ENCODE measurements at regions of chr16 and their contacts with region 1.

Region 1: DNA sequence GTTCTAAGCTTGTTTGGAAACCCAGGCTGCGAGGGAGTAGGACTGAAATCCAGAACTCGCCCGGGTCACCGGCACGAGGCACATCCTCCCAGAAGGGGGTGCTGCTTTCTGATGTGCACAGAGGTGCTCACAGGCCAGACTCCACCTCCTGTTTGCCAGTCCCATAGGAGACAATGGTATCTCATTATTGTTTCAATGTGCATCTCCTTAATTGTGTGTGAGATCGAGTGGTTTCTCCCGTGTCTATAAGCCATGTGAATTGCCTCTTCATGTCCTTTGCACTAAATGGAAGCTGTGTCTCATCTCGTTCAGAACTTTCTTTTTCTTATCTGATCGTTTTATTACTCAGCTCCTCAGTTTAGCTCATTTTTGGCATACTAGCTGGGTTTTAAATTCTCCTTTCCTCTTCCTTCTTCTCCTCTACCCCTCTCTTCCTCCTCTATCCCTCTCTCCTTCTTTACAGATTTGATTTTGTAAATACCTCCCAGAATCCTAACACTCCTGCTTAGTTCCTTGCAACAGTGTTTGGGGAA is 32.1 kb upstream of the PRKCB start:
- DNase-seq: peak; percentile 42 to 81 (median 58)
- H3K4me3 ChIP-seq: peak overlapping the region; percentile 27
- H3K4me3 Mint-ChIP-seq: peak overlapping the region in 5 of 7 donors; percentile 27 to 61 (median 43)
- H3K27ac ChIP-seq: peak overlapping the region; percentile 13
- H3K27ac Mint-ChIP-seq: peak overlapping the region in 4 of 8 donors; percentile 11 to 93 (median 51)
- H3K4me1 ChIP-seq: no peaks in the 10 kb centered on the region
- H3K4me1 Mint-ChIP-seq: peaks cover 11 to 16% (median 11%) of the 10 kb centered on the region in 3 donors
- H3K27me3 ChIP-seq: no peaks in the 10 kb centered on the region
- H3K27me3 Mint-ChIP-seq: peaks cover 0 to 3% of the 10 kb centered on the region in 2 donors

Region 2: GRCh38 chr16:23826528-23827045 is 22.9 kb after region 1 on chr16:
- CTCF ChIA-PET with region 1: interaction called, 13 read pairs
- POLR2A ChIA-PET with region 1: no interaction called
- DNase-seq: peak in 2 of 5 donors; percentile 59 to 63
- H3K4me3 ChIP-seq: peak overlapping the region; percentile 6
- H3K4me3 Mint-ChIP-seq: peak overlapping the region; percentile 10 to 83 (median 70)
- H3K27ac ChIP-seq: peak overlapping the region; percentile 55
- H3K27ac Mint-ChIP-seq: peak overlapping the region; percentile 78 to 96 (median 92)
- H3K4me1 ChIP-seq: peaks cover 29% of the 10 kb centered on the region
- H3K4me1 Mint-ChIP-seq: peaks cover 37 to 44% (median 44%) of the 10 kb centered on the region in 3 donors
- H3K27me3 ChIP-seq: no peaks in the 10 kb centered on the region
- H3K27me3 Mint-ChIP-seq: no peaks in the 10 kb centered on the region

Region 3: DNA sequence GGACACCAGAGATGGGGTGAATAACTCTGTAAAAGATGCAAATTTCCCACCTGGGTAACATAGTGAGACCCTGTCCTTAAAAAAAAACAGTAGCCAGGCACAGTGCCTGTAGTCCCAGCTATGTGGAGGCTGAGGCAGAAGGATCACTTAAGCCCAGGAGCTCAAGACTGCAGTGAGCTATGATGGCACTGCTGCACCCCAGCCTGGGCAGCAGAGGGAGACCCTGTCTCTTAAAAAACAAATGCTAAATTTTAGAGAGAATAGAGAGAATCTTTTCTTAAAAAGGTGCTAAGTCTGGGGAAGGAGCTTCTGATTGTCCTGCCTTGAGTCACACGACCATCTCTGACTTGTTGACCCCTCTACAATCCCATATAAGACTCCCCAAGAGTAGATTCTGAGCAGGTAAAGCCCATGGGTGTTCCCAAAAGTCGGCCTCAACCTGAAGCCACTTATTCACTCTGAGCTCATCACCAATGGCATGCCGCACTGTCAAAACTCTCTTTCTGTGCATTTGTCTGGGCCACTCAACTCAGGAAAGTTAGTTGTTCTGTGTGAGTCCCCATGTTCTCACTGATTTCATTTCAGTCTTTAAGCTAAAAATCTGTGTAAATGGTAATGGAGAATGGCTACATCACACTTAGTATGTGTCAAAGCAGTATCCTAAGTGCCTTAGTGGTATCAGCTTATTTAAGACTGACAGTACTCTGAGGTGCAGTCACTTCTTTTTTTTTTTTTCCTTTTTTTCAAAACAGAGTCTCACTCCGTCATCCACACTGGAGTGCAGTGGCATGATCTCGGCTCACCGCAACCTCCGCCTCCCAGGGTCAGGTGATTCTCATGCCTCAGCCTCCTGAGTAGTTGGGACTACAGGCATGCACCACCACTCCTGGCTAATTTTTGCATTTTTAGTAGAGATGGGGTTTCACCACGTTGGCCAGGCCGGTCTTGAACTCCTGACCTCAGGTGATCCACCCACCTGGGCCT is 73.7 kb after region 1 on chr16:
- CTCF ChIA-PET with region 1: interaction called, 11 read pairs
- POLR2A ChIA-PET with region 1: interaction called, 5 read pairs
- DNase-seq: peak in 1 of 5 donors; percentile 28
- H3K4me3 ChIP-seq: no peak overlapping the region
- H3K4me3 Mint-ChIP-seq: peak overlapping the region in 1 of 7 donors; percentile 40
- H3K27ac ChIP-seq: no peak overlapping the region
- H3K27ac Mint-ChIP-seq: peak overlapping the region in 7 of 8 donors; percentile 50 to 80 (median 73)
- H3K4me1 ChIP-seq: peaks cover 54% of the 10 kb centered on the region
- H3K4me1 Mint-ChIP-seq: peaks cover 72 to 87% (median 82%) of the 10 kb centered on the region in 3 donors
- H3K27me3 ChIP-seq: no peaks in the 10 kb centered on the region
- H3K27me3 Mint-ChIP-seq: no peaks in the 10 kb centered on the region

Region 4: GRCh38 chr16:24036614-24037013 is 233.0 kb after region 1 on chr16:
- CTCF ChIA-PET with region 1: interaction called, 121 read pairs
- POLR2A ChIA-PET with region 1: interaction called, 3 read pairs
- DNase-seq: peak in 4 of 5 donors; percentile 12 to 50 (median 30)
- H3K4me3 ChIP-seq: no peak overlapping the region
- H3K4me3 Mint-ChIP-seq: peak overlapping the region in 6 of 7 donors; percentile 43 to 96 (median 77)
- H3K27ac ChIP-seq: no peak overlapping the region
- H3K27ac Mint-ChIP-seq: peak overlapping the region in 6 of 8 donors; percentile 11 to 84 (median 62)
- H3K4me1 ChIP-seq: peaks cover 42% of the 10 kb centered on the region
- H3K4me1 Mint-ChIP-seq: peaks cover 48 to 66% (median 61%) of the 10 kb centered on the region in 3 donors
- H3K27me3 ChIP-seq: no peaks in the 10 kb centered on the region
- H3K27me3 Mint-ChIP-seq: no peaks in the 10 kb centered on the region

Region 5: DNA sequence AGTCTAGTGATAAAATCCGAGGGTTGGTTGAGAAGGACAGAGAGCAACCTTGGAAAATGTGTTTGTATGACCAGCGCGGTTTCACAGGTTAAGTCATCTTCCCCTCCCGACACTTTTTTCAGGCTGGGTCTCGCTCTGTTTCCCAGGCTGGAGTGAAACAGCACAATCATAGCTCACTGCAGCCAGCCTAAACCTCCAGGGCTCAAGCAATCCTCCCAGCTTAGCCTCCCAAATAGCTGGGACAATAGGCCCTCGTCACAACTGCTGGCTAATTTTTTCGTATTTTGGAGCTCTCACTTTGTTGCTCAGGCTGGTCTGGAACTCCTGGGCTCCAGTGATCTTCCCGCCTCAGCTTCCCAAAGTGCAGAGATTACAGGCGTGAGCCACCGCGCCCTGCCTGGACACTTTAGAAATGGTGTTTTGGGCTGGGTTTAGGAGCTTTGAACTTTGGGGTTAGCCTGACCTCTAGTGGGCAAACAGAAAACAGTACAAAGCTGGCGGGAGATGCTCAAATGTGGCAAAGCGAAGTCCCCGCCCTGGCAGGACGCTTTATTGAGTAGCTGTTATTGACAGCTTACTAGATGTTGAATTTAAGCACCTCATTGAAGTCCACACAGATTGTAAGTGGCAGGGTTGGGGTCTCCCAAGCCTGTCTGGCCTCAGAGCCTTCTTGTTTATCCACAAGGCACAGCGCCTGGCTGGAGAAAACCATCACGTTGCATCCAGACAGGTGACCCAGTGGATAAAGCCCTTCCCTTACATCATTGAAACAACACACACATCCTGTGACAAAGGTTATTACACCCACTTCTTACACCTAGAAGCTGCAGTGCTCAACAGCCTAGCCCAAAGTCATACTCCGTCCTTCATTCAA is 701.1 kb after region 1 on chr16:
- CTCF ChIA-PET with region 1: interaction called, 11 read pairs
- POLR2A ChIA-PET with region 1: no interaction called
- DNase-seq: peak; percentile 19 to 59 (median 40)
- H3K4me3 ChIP-seq: no peak overlapping the region
- H3K4me3 Mint-ChIP-seq: no peak overlapping the region
- H3K27ac ChIP-seq: no peak overlapping the region
- H3K27ac Mint-ChIP-seq: no peak overlapping the region
- H3K4me1 ChIP-seq: no peaks in the 10 kb centered on the region
- H3K4me1 Mint-ChIP-seq: no peaks in the 10 kb centered on the region
- H3K27me3 ChIP-seq: no peaks in the 10 kb centered on the region
- H3K27me3 Mint-ChIP-seq: peaks cover 12 to 33% of the 10 kb centered on the region in 2 donors